Left ventricle myocardium superior (tissue), 1 donor: ENCODE measurements at regions of chr7 and their contacts with region 1.

Region 1: GRCh38 chr7:78383096-78383880 is 584.7 kb downstream of the PHTF2 start:
- DNase-seq: no peak
- ATAC-seq: no peak

Region 2: DNA sequence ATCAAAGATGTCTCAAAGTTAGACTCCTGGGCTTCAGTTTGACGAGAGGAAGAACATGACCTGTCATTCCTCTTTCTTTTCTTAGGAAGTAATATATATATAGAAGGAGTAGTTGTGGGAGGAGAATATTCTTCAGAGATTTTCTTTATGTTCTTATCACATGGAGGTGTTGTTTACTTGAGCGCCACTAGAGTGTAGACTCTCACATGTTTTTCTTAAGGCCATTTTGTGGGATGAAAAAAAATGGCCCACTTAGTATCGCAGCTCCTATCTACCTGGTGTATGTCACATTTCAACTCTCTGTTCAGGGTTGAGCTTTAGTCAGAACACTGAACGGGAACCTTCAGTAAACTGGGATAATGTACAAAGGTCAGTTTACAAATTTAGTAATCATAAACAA is 60.5 kb after region 1 on chr7:
- intact Hi-C with region 1: loop called (anchors 2 kb)
- DNase-seq: no peak
- ATAC-seq: no peak

Region 3: GRCh38 chr7:78607099-78607498 is 223.8 kb after region 1 on chr7:
- intact Hi-C with region 1: no loop called
- DNase-seq: no peak
- ATAC-seq: no peak